ENCODE measurements at regions of chr20 and their contacts with region 1.

Region 1: DNA sequence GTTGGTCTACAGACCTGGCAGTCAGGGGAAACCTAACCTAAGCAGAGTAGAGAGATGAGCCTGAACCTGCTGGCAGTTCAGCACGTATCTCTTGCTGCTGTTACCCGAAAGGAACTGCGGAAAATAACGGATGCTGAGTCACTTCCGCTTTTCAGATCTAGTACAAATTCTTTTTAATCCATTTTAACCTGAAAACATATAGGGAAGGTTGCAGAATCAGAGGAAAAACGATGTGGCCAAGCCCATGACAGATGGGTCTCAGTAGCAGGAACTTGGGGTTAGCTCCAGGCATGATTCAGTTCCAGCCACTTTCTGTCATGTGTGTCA is 351.9 kb upstream of the PRND start:
- DNase-seq: no peak
- H3K4me3 ChIP-seq: no peak overlapping the region
- CTCF ChIP-seq: no peak

Region 2: DNA sequence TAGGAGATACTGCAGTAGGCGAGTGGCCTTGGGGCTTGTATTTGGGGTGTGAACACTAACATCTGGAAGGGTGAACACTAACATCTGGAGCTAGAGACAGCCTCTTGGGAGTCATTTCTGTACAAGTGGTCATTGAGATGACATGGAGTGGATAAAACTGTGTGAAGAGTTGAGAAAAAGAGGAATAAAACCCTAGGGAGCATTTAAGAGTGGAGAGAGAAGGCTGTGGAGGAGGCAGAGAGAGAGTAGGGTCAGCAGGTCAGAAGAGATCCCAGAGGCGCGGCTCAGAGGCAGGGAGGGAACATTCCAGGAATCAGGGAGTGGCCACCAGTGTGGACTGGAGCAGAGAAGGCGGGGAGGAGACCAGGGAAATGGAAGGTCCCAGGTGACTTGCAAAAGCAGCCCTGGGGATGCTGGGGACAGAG is 152.4 kb before region 1 on chr20:
- in situ Hi-C with region 1: no loop called
- DNase-seq: no peak
- H3K4me3 ChIP-seq: no peak overlapping the region
- CTCF ChIP-seq: no peak

Region 3: GRCh38 chr20:4320291-4320690 is 49.5 kb before region 1 on chr20:
- in situ Hi-C with region 1: loop called (anchors 5 kb)
- DNase-seq: no peak
- H3K4me3 ChIP-seq: no peak overlapping the region
- CTCF ChIP-seq: no peak

Region 4: DNA sequence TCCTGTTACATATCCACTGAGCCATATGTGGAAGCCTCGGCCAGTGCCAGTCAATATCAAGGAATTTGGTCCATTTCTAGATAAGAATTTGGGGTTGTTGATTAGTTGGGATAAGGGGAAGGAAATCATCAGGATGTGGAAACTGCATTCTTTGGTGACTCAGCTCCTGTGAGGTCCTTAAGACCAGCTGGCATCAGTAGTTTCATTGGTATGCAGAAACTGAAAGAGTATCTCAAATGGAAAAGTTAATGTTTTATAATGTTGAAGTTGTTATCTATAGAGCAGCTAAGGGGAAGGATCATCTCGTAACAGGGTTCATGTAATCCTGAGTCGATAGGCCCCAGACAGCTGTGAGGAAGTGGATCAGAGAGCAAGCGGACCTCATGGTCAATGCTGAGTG is 264.0 kb after region 1 on chr20:
- in situ Hi-C with region 1: no loop called
- DNase-seq: peak; percentile 53
- H3K4me3 ChIP-seq: no peak overlapping the region
- CTCF ChIP-seq: no peak